ENCODE measurements at regions of chr16 and their contacts with region 1.

Region 1: GRCh38 chr16:57770361-57770760 is 31.9 kb downstream of the KIFC3 start:
- DNase-seq: no peak
- ATAC-seq: no peak
- H3K4me3 Mint-ChIP-seq: no peak overlapping the region
- H3K27ac Mint-ChIP-seq: no peak overlapping the region
- H3K4me1 Mint-ChIP-seq: no peaks in the 10 kb centered on the region
- H3K27me3 Mint-ChIP-seq: no peaks in the 10 kb centered on the region
- CTCF ChIP-seq: no peak

Region 2: DNA sequence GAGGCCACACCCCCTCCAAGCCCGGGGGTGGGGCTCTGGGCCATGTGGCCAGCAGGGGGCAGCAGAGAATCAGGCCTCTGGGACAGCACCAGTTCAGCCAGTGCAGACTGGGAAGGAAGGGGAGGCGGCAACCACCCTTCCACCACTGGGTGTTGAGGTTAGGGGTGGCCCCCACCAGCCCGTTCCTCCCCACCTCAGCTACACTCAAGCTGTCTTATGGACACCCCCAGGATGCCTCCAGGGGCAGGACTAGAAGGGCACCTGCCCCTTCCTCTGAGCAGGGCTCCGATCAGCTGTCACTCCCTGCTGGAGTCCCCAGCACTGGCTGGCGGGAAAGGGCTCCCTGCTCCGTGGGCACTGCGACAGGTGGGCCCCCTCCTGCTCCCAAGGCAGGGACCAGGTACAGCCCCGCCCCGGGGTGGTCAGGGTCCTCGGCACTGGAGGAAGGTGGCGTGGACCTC is 13.0 kb before region 1 on chr16:
- CTCF ChIA-PET with region 1: interaction called, 13 read pairs
- POLR2A ChIA-PET with region 1: no interaction called
- intact Hi-C with region 1: no loop called
- DNase-seq: peak; percentile 88
- ATAC-seq: peak; percentile 97
- H3K4me3 Mint-ChIP-seq: no peak overlapping the region
- H3K27ac Mint-ChIP-seq: no peak overlapping the region
- H3K4me1 Mint-ChIP-seq: peaks cover 4% of the 10 kb centered on the region
- H3K27me3 Mint-ChIP-seq: no peaks in the 10 kb centered on the region
- CTCF ChIP-seq: peak; percentile 93